ENCODE measurements at regions of chr17 and their contacts with region 1.

Region 1: DNA sequence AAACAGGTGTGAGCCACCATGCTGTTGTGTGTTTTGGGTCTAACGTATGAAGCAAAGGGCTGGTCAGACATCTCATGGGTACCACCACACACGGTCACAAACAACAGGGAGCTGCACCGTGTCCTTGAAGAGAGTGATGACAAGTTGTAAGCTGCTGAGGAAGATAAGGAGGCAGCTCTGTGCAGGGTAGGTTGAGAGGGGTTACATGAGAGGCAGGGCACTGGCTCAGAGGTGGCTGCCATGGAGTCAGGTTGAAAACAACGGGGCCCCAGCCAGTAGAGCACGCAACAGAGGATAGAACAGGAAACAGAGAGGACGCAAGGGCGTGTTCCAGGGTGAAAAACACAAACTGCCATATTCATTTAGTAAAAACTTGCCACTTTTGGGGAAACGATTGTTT is 52.2 kb downstream of the TRARG1 start:
- DNase-seq: no peak
- H3K4me3 ChIP-seq: no peak overlapping the region
- H3K27ac ChIP-seq: no peak overlapping the region
- H3K4me1 ChIP-seq: no peaks in the 10 kb centered on the region
- H3K27me3 ChIP-seq: no peaks in the 10 kb centered on the region
- CTCF ChIP-seq: no peak
- POLR2A ChIP-seq: no peak

Region 2: DNA sequence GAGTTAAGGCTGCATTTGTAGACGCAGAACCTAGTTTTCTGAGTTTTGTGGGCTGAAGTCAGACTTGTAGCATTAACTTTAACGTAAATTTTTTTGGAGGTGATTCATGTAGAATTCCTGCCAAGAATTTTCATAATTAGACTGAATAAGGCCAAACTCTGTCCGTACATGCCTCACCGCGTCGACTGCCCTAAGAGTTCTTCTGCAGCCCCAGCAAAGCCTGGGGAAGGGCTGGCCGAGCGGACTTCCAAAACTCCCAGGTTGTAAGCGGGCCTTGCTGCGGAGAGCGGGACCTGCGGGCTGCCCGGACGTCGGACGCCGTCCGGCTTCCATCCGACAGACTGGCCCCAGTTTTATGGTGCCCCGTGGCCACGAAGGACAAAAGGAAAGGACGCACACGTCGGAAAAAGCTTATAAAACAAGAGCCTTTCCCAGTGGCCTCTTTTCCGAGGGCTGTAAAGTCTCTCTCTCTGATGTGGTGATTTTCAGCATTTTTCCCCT is 427.7 kb before region 1 on chr17:
- intact Hi-C with region 1: no loop called
- DNase-seq: peak in 1 of 2 donors; percentile 78
- H3K4me3 ChIP-seq: no peak overlapping the region
- H3K27ac ChIP-seq: peak overlapping the region; percentile 84 to 98
- H3K4me1 ChIP-seq: peaks cover 8 to 11% of the 10 kb centered on the region in 2 donors
- H3K27me3 ChIP-seq: no peaks in the 10 kb centered on the region
- CTCF ChIP-seq: no peak
- POLR2A ChIP-seq: no peak

Region 3: GRCh38 chr17:1087381-1088241 is 244.1 kb before region 1 on chr17:
- intact Hi-C with region 1: no loop called
- DNase-seq: peak; percentile 66 to 77
- H3K4me3 ChIP-seq: no peak overlapping the region
- H3K27ac ChIP-seq: peak overlapping the region; percentile 50 to 59
- H3K4me1 ChIP-seq: peaks cover 0 to 4% of the 10 kb centered on the region in 2 donors
- H3K27me3 ChIP-seq: no peaks in the 10 kb centered on the region
- CTCF ChIP-seq: no peak
- POLR2A ChIP-seq: no peak

Region 4: DNA sequence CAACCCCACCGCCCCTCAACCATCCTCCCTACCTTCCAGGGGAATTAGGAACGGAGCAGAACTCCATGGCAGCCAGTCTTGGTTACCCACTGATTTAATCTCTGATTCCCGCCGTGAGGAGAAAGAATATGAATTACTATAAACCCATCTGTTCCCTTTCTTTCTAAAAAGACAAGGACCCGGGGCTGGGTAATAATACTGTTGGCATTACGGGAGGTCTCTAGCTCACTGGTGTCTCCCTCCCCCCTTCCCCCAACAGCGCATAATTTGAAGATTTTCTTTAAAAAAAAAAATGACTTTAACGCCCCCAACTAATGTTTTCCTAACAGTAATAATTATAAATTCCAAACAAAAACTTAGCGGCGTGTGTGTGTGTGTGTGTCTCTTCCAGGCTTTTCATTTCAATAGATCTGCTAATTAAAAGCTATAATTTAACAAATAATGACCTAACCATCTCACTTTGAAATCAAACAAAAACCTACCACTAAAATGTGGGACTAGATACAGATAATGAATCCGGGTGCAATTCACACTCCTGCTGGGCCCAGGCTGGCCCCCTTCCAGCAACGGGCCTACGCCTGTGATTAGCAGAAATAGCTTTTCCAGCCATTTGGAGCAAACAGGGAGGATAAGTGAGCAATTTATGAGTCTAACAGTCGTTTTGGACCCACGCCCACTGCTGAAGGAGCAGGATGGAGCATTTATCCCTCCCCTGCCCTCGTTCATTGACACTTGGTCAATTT is 79.7 kb before region 1 on chr17:
- intact Hi-C with region 1: loop called (anchors 10 kb)
- DNase-seq: no peak
- H3K4me3 ChIP-seq: no peak overlapping the region
- H3K27ac ChIP-seq: no peak overlapping the region
- H3K4me1 ChIP-seq: no peaks in the 10 kb centered on the region
- H3K27me3 ChIP-seq: no peaks in the 10 kb centered on the region
- CTCF ChIP-seq: no peak
- POLR2A ChIP-seq: no peak

Region 5: GRCh38 chr17:1703063-1703462 is 371.4 kb after region 1 on chr17:
- intact Hi-C with region 1: no loop called
- DNase-seq: no peak
- H3K4me3 ChIP-seq: no peak overlapping the region
- H3K27ac ChIP-seq: no peak overlapping the region
- H3K4me1 ChIP-seq: no peaks in the 10 kb centered on the region
- H3K27me3 ChIP-seq: no peaks in the 10 kb centered on the region
- CTCF ChIP-seq: no peak
- POLR2A ChIP-seq: no peak

Region 6: GRCh38 chr17:2094891-2095535 is 763.3 kb after region 1 on chr17:
- intact Hi-C with region 1: no loop called
- DNase-seq: peak; percentile 62
- H3K4me3 ChIP-seq: no peak overlapping the region
- H3K27ac ChIP-seq: peak overlapping the region; percentile 54 to 58
- H3K4me1 ChIP-seq: peaks cover 8 to 10% of the 10 kb centered on the region in 2 donors
- H3K27me3 ChIP-seq: no peaks in the 10 kb centered on the region
- CTCF ChIP-seq: peak; percentile 52 to 67 (median 55)
- POLR2A ChIP-seq: no peak

Measured in uterus (tissue), 4 donors.